ENCODE measurements at regions of chr10 and their contacts with region 1.

Region 1: GRCh38 chr10:61937631-61938351 is 36.3 kb downstream of the ARID5B start:
- DNase-seq: no peak
- H3K4me3 ChIP-seq: no peak overlapping the region
- CTCF ChIP-seq: no peak

Region 2: GRCh38 chr10:61987951-61988379 is 50.2 kb after region 1 on chr10:
- in situ Hi-C with region 1: no loop called
- DNase-seq: no peak
- H3K4me3 ChIP-seq: no peak overlapping the region
- CTCF ChIP-seq: no peak

Region 3: DNA sequence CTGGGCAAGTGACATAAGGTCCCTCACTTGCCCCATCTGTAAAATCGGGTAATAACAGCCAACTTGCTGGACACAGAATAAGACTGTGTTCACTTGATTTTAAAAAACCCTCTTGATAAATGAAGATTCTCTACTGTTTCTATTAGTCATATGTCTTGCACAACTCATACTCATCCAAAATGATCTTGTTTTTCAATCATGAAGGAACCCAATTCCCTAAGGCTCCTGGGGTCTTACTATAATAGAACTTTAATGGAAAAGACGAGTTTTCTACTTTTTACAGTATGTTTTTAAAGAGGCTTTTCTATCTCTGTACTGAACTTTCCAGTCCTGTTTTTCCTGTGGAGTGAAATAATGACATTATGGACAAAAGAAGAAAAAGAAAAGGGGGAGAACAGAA is 67.5 kb after region 1 on chr10:
- in situ Hi-C with region 1: loop called (anchors 5 kb)
- DNase-seq: no peak
- H3K4me3 ChIP-seq: no peak overlapping the region
- CTCF ChIP-seq: no peak

Measured in astrocyte of the cerebellum (primary cell).